Activated CD8-positive, alpha-beta memory T cell treated with anti-CD3 and anti-CD28 coated beads, Interleukin-2, amount 10 ng/mL, durations not matched to agents 7 days and 5 days (primary cell): ENCODE measurements at regions of chr2 and their contacts with region 1.

Region 1: GRCh38 chr2:224793946-224794345 is 77.8 kb upstream of the CCDC195 start:
- DNase-seq: no peak
- ATAC-seq: no peak
- H3K4me3 Mint-ChIP-seq: no peak overlapping the region
- H3K27ac Mint-ChIP-seq: no peak overlapping the region
- H3K4me1 Mint-ChIP-seq: peaks cover 1% of the 10 kb centered on the region
- H3K27me3 Mint-ChIP-seq: no peaks in the 10 kb centered on the region

Region 2: GRCh38 chr2:224778474-224778877 is 15.5 kb before region 1 on chr2:
- CTCF ChIA-PET with region 1: interaction called, 10 read pairs
- DNase-seq: peak; percentile 72
- ATAC-seq: peak; percentile 60
- H3K4me3 Mint-ChIP-seq: no peak overlapping the region
- H3K27ac Mint-ChIP-seq: no peak overlapping the region
- H3K4me1 Mint-ChIP-seq: peaks cover 4% of the 10 kb centered on the region
- H3K27me3 Mint-ChIP-seq: no peaks in the 10 kb centered on the region